Pancreas (tissue), 10 donors: ENCODE measurements at regions of chr3 and their contacts with region 1.

Region 1: DNA sequence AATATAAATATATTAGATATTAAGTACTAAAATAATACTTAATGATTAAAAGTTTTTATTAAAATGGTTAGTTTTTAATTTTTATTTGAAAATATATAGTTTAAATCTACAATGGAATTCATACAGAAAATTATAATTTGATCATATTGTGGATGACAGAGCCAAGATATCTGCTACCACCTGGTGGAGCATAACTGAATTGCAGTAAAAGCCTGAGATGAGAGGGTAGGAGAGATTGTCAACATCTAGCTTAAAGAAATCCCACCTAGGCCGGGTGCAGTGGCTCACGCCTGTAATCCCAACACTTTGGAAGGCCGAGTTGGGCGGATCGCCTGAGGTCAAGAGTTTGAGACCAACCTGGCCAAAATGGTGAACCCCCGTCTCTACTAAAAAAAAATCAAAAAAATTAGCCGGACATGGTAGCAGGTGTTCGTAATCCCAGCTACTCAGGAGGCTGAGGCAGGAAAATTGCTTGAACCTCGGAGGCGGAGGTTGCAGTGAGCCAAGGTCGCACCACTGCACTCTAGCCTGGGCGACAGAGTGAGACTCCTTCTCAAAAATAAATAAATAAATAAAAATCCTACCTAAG is 25.1 kb upstream of the CSTA start:
- DNase-seq: peak in 1 of 6 donors; percentile 27
- ATAC-seq: peak in 3 of 4 donors; percentile 50 to 81 (median 66)
- H3K4me3 ChIP-seq: no peak overlapping the region
- H3K27ac ChIP-seq: no peak overlapping the region
- H3K4me1 ChIP-seq: peaks cover 0 to 5% (median 1%) of the 10 kb centered on the region in 3 donors
- H3K27me3 ChIP-seq: no peaks in the 10 kb centered on the region
- CTCF ChIP-seq: peak in 3 of 4 donors; percentile 38 to 51 (median 50)

Region 2: DNA sequence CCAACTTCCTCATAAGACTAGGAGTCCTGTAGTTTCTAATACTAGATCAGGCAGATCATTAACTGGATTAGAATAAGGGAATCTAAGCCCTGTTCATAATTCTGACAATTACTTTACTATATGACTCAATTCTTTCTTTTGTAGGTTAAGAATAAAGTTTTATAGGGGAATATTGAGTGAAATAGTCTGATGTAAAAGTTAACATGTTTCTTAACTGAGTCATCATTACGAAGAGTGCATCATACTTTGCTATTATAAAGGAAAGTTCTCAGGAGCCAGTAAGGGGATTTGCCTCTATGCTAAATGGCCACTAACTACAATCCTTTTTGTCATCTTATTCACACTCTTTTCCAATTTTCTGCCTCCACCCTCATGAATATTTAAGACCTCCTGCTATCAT is 817.3 kb before region 1 on chr3:
- intact Hi-C with region 1: no loop called
- DNase-seq: no peak
- ATAC-seq: no peak
- H3K4me3 ChIP-seq: no peak overlapping the region
- H3K27ac ChIP-seq: no peak overlapping the region
- H3K4me1 ChIP-seq: no peaks in the 10 kb centered on the region
- H3K27me3 ChIP-seq: no peaks in the 10 kb centered on the region
- CTCF ChIP-seq: no peak

Region 3: DNA sequence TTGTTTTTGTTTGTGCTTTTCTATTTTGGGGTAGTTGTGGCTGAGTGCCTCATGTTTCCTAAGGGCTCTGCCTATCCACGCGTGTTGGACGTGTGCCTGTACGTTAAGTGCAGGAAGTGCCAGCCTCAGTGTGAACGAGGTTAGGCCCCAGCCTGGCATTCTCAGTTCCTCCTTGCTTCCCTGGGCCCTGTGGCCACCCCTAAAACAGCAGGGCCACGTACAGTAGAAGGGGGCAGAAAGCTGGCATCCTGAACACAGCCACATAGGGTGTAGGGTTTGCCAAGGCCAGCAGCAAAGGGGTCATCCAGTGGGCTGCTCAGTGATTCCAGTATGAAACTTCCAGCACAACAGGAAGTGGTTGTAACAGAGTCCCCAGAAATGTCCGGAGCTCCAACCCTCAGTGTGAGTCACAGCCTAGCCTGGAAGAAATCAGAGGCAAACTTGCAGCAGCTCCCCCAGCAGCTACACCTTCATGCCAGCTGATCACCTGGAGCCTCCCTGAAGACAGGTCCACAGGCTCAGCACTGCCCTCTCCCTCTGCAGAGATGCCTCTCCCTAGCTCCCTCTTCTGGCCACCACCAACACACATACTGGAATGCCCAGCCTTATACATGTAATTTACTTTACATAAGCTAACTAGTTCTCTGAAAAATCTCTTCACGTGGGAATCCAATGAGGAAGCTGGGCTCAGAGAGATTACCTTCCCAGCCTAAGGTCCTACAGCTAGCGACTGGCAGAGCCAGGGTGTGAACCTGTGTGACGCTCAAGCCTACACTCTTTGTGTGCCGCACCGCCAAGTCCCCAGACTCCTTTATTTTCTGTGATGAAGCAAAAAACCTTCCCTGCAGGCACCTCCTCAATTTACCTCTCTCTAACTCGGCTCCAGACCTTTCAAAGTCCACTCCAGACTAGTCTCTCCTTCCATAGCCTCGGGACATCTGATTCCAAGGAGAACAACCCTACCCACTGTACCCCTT is 304.5 kb before region 1 on chr3:
- intact Hi-C with region 1: no loop called
- DNase-seq: peak; percentile 58 to 79 (median 64)
- ATAC-seq: peak; percentile 87 to 96 (median 90)
- H3K4me3 ChIP-seq: no peak overlapping the region
- H3K27ac ChIP-seq: peak overlapping the region in 2 of 4 donors; percentile 51 to 52
- H3K4me1 ChIP-seq: no peaks in the 10 kb centered on the region
- H3K27me3 ChIP-seq: no peaks in the 10 kb centered on the region
- CTCF ChIP-seq: peak in 3 of 4 donors; percentile 12 to 45 (median 42)

Region 4: GRCh38 chr3:122169908-122170307 is 130.1 kb before region 1 on chr3:
- intact Hi-C with region 1: no loop called
- DNase-seq: no peak
- ATAC-seq: no peak
- H3K4me3 ChIP-seq: no peak overlapping the region
- H3K27ac ChIP-seq: no peak overlapping the region
- H3K4me1 ChIP-seq: no peaks in the 10 kb centered on the region
- H3K27me3 ChIP-seq: no peaks in the 10 kb centered on the region
- CTCF ChIP-seq: no peak

Region 5: GRCh38 chr3:122356415-122356814 is 56.4 kb after region 1 on chr3:
- intact Hi-C with region 1: loop called in 1 of 3 experiments (anchors 10 kb)
- DNase-seq: peak; percentile 43 to 65 (median 49)
- ATAC-seq: peak; percentile 80 to 99 (median 94)
- H3K4me3 ChIP-seq: no peak overlapping the region
- H3K27ac ChIP-seq: no peak overlapping the region
- H3K4me1 ChIP-seq: peaks cover 0 to 7% (median 3%) of the 10 kb centered on the region in 3 donors
- H3K27me3 ChIP-seq: no peaks in the 10 kb centered on the region
- CTCF ChIP-seq: peak in 3 of 4 donors; percentile 11 to 27 (median 26)